ENCODE measurements at regions of chr4 and their contacts with region 1.

Region 1: DNA sequence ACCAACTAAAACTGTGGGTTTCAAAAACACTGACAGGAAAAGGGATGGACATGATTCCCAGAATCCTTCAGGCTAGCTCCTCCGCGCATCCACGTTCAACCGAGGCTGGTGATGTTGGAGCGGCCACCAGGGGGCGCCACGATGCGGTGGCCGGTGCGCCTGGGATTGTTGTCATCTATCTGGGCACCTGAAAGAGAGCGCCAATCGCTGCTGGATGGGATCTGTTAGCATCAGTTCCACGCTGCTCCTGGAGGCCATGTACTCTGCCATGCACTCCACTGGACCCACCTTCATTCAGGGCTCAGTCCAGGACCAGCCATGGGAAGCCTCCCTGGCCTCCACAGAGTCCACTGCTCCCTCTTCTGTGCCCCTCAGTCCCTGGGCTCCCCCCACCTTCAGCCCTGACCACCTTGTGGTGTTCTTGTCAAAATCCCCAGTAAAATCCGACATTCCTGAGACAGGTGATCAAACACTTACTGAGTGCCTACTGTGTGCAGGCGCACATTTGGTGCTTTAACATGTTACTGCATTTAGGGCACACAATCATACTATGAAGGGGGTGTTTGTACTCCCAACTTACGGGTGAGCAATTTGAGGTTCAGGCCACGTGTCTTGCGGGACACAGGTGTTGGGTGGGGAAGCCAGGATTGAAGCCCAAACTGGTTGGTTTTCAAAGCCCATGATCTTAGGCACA is 71.1 kb downstream of the CRMP1 start:
- DNase-seq: peak; percentile 71
- ATAC-seq: peak; percentile 72
- H3K4me3 Mint-ChIP-seq: no peak overlapping the region
- H3K27ac Mint-ChIP-seq: no peak overlapping the region
- H3K4me1 Mint-ChIP-seq: no peaks in the 10 kb centered on the region; the same call in 1 of the 2 replicates
- H3K27me3 Mint-ChIP-seq: no peaks in the 10 kb centered on the region
- CTCF ChIP-seq: peak; percentile 93

Region 2: GRCh38 chr4:5683566-5683965 is 138.2 kb before region 1 on chr4:
- CTCF ChIA-PET with region 1: no interaction called
- POLR2A ChIA-PET with region 1: no interaction called
- DNase-seq: no peak
- ATAC-seq: no peak
- H3K4me3 Mint-ChIP-seq: no peak overlapping the region
- H3K27ac Mint-ChIP-seq: peak overlapping the region; percentile 41
- H3K4me1 Mint-ChIP-seq: peaks cover 6% of the 10 kb centered on the region; the same call in 1 of the 2 replicates
- H3K27me3 Mint-ChIP-seq: no peaks in the 10 kb centered on the region
- CTCF ChIP-seq: no peak

Region 3: GRCh38 chr4:5845035-5845905 is 23.5 kb after region 1 on chr4:
- CTCF ChIA-PET with region 1: interaction called, 12 read pairs
- POLR2A ChIA-PET with region 1: no interaction called
- DNase-seq: no peak
- ATAC-seq: no peak
- H3K4me3 Mint-ChIP-seq: no peak overlapping the region
- H3K27ac Mint-ChIP-seq: no peak overlapping the region
- H3K4me1 Mint-ChIP-seq: peaks cover 8% of the 10 kb centered on the region
- H3K27me3 Mint-ChIP-seq: no peaks in the 10 kb centered on the region
- CTCF ChIP-seq: no peak

Region 4: DNA sequence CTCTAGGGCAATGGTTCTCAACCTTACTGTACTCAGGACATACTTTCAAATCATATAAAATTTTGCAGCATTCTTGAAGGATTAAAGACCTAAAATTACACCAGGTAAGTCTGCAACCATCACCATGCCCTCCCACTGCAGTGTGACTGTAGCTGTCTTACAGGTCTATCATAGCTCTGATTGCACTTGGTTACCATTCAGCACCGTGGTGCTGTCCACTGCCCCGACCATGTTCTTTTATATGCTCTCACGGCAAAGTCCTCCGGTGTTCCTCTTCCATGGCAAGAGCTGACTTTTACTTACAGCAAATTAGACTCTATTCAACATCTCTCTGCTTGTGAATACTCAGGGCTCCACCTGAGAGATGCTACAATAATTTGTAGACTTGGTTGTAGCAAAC is 59.5 kb after region 1 on chr4:
- CTCF ChIA-PET with region 1: interaction called, 10 read pairs
- POLR2A ChIA-PET with region 1: no interaction called
- DNase-seq: no peak
- ATAC-seq: peak; percentile 61
- H3K4me3 Mint-ChIP-seq: no peak overlapping the region
- H3K27ac Mint-ChIP-seq: no peak overlapping the region
- H3K4me1 Mint-ChIP-seq: peaks cover 68% of the 10 kb centered on the region
- H3K27me3 Mint-ChIP-seq: no peaks in the 10 kb centered on the region
- CTCF ChIP-seq: no peak

Region 5: GRCh38 chr4:5963611-5964010 is 141.8 kb after region 1 on chr4:
- CTCF ChIA-PET with region 1: interaction called, 14 read pairs
- POLR2A ChIA-PET with region 1: no interaction called
- DNase-seq: peak; percentile 40
- ATAC-seq: peak; percentile 71
- H3K4me3 Mint-ChIP-seq: no peak overlapping the region
- H3K27ac Mint-ChIP-seq: no peak overlapping the region
- H3K4me1 Mint-ChIP-seq: peaks cover 5% of the 10 kb centered on the region
- H3K27me3 Mint-ChIP-seq: peaks cover 20% of the 10 kb centered on the region
- CTCF ChIP-seq: no peak

Region 6: DNA sequence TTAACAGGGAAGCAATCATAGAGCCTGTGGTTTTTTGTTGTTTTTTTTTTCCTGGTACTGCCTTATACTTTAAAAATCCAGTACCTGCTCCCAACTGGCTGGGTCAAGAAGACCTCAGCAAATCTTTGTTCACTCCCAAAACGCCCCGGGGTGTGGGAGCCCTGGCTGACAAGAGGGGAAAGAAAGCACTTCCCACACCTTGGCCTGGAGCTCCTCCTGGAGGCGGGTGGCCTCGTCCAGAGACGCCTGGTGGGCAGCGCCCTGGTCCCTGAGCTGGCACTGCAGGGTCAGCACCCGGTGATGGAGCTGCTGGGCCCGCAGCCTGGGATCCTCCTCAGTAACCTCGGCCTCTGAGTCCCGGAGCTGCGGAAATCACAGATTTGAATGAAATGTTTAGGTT is 158.2 kb after region 1 on chr4:
- CTCF ChIA-PET with region 1: interaction called, 63 read pairs
- POLR2A ChIA-PET with region 1: no interaction called
- DNase-seq: peak; percentile 85
- ATAC-seq: peak; percentile 96
- H3K4me3 Mint-ChIP-seq: no peak overlapping the region
- H3K27ac Mint-ChIP-seq: no peak overlapping the region
- H3K4me1 Mint-ChIP-seq: peaks cover 2% of the 10 kb centered on the region; the same call in 1 of the 2 replicates
- H3K27me3 Mint-ChIP-seq: peaks cover 13% of the 10 kb centered on the region
- CTCF ChIP-seq: no peak

Measured in WTC11 (cell line).